ENCODE measurements at regions of chr14 and their contacts with region 1.

Region 1: GRCh38 chr14:23269193-23269592 is 16.7 kb downstream of the HOMEZ start:
- DNase-seq: no peak
- H3K4me3 ChIP-seq: no peak overlapping the region
- H3K27ac ChIP-seq: no peak overlapping the region
- H3K4me1 ChIP-seq: no peaks in the 10 kb centered on the region
- H3K27me3 ChIP-seq: no peaks in the 10 kb centered on the region
- CTCF ChIP-seq: no peak

Region 2: GRCh38 chr14:23104591-23105347 is 164.4 kb before region 1 on chr14 and contains the start of gene CIROP:
- intact Hi-C with region 1: no loop called
- DNase-seq: peak in 1 of 2 donors; percentile 30
- H3K4me3 ChIP-seq: no peak within 1 kb of the TSS
- H3K27ac ChIP-seq: no peak within 1 kb of the TSS
- H3K4me1 ChIP-seq: no peaks in the 10 kb centered on the region
- H3K27me3 ChIP-seq: no peaks in the 10 kb centered on the region
- CTCF ChIP-seq: no peak
- total RNA-seq, gene CIROP: not detected

Region 3: DNA sequence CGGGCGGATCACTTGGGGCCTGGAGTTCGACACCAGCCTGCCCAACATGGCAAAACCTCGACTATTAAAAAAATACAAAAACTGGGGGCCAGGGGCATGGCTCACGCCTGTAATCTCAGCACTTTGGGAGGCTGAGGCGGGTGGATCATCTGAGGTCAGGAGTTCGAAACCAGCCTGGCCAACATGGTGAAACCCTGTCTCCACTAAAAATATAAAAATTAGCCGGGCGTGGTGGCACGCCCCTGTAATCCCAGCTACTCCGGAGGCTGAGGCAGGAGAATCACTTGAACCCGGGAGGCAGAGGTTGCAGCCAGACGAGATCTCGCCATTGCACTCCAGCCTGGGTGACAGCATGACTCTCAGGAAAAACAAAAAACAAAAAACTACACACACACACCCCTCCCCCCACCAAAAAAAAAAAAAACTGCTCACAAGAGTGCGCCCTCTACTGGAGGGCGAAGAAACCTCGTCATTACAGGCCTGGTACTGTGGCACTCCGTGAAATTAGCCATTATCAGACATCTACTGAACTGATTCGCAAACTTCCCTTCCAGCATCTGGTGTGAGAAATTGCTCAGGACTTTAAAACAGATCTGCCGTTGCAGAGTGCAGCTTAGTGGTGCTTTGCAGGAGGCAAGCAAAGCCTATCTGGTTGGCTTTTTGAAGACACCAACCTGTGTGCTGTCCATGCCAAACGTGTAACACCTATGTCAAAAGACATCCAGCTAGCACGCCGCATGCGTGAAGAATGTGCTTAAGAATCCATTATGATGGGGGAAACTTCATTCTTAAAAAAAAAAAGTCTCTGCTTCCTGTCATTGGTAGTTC is 25.8 kb after region 1 on chr14:
- intact Hi-C with region 1: loop called (anchors 1 kb)
- DNase-seq: no peak
- H3K4me3 ChIP-seq: peak overlapping the region in 1 of 2 donors; percentile 26
- H3K27ac ChIP-seq: no peak overlapping the region
- H3K4me1 ChIP-seq: peaks cover 5 to 10% of the 10 kb centered on the region in 2 donors
- H3K27me3 ChIP-seq: no peaks in the 10 kb centered on the region
- CTCF ChIP-seq: peak; percentile 59 to 89 (median 81)

Region 4: GRCh38 chr14:23379366-23380196 is 110.4 kb after region 1 on chr14:
- intact Hi-C with region 1: loop called (anchors 1 kb)
- DNase-seq: no peak
- H3K4me3 ChIP-seq: no peak overlapping the region
- H3K27ac ChIP-seq: no peak overlapping the region
- H3K4me1 ChIP-seq: no peaks in the 10 kb centered on the region
- H3K27me3 ChIP-seq: no peaks in the 10 kb centered on the region
- CTCF ChIP-seq: peak; percentile 84 to 93 (median 84)

Region 5: GRCh38 chr14:23602181-23603095 is 333.2 kb after region 1 on chr14:
- intact Hi-C with region 1: no loop called
- DNase-seq: no peak
- H3K4me3 ChIP-seq: no peak overlapping the region
- H3K27ac ChIP-seq: no peak overlapping the region
- H3K4me1 ChIP-seq: no peaks in the 10 kb centered on the region
- H3K27me3 ChIP-seq: no peaks in the 10 kb centered on the region
- CTCF ChIP-seq: no peak